ENCODE measurements at regions of chr7 and their contacts with region 1.

Region 1: DNA sequence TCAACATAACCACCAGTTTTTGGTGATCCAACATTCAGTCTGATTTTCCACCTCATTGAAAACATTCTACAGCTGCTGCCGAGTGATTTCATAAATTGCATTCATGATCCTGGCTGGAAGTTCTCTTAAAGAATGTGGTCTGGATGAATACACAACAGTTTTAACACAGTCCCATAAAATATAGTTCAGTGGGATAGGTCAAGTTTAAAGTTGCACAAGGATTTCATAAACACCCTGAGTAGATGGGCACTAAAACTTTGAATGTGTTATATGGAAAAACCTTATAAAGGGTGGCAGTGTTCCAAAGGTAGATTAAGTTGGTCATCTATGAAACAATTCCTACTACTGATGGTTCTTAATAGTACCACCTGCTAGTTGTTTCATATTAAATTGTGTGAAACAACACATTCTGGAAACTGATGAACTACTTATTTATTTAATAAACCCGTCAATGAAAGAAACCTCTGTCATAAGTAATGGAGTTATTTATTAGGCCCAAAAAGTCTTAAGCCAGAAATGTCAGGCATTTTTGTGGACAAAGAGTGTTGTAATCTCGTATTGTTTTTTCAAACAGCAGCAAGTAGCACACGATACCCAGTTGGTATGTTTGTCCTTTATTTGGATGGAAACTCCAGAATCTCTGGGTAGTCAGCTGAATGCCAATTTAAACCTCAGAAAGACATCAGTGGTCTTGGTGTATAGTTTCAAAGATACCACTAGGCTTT is 14.3 kb upstream of the RPA3 start:
- DNase-seq: no peak
- ATAC-seq: no peak
- H3K4me3 Mint-ChIP-seq: no peak overlapping the region
- H3K27ac Mint-ChIP-seq: no peak overlapping the region
- H3K4me1 Mint-ChIP-seq: no peaks in the 10 kb centered on the region
- H3K27me3 Mint-ChIP-seq: no peaks in the 10 kb centered on the region

Region 2: DNA sequence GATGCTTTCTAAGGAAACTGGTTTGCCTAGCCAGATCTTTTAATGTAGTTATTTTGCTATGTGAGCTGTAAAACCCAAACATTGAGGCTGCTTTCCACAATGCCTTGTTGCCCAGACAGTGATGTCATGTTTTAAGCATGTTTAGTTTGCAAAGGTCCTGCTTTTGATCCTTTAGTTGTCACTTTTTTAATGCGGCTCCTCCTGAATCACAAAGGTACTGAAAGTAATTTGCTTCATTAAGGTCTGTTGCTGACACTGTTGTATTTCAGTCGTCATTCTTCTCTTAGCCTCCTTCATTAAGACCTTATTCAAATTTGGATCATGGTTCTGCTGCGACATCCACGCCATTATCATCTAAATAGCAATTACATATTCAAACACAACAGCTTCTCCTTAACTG is 24.9 kb before region 1 on chr7:
- CTCF ChIA-PET with region 1: interaction called, 3 read pairs
- POLR2A ChIA-PET with region 1: no interaction called
- intact Hi-C with region 1: loop called in 1 of 2 experiments (anchors 2 kb)
- DNase-seq: no peak
- ATAC-seq: no peak
- H3K4me3 Mint-ChIP-seq: no peak overlapping the region
- H3K27ac Mint-ChIP-seq: no peak overlapping the region
- H3K4me1 Mint-ChIP-seq: peaks cover 17% of the 10 kb centered on the region
- H3K27me3 Mint-ChIP-seq: no peaks in the 10 kb centered on the region